ENCODE measurements at regions of chr1 and their contacts with region 1.

Region 1: DNA sequence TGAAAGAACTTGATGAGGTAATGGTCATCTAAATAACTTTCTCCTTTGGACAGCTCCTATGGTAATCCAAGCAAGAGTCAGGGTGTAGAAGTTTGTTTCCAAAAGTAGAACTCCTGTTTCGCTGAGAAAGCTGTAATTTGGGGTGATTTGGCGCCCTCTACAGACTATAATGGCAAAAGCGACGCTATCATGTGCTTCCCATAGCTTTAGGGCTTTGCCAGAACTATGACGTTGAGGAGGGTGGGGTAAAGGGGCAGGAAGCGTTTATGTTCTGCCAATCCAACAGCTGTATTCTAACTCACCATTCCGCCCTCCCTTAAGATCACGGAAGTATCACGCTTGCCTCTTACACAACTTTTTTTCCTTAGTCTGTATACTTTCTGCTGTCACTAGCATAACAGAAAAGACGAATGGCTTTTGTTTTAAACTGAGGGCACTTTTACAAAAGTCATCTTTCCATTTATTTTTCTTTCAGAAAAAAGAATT is at the start of gene FMO4:
- DNase-seq: peak; percentile 90
- ATAC-seq: peak; percentile 100
- H3K4me3 ChIP-seq: peak within 1 kb of the TSS in 2 of 3 experiments; percentile 1 to 19; a peak in 3 of 6 replicates
- H3K27ac ChIP-seq: no peak within 1 kb of the TSS
- H3K4me1 ChIP-seq: peaks cover 8% of the 10 kb centered on the region; the same call in 1 of the 2 replicates
- H3K27me3 ChIP-seq: no peaks in the 10 kb centered on the region
- CTCF ChIP-seq: peak; percentile 82
- EP300 ChIP-seq: no peak
- POLR2A ChIP-seq: no peak
- RAD21 ChIP-seq: peak; percentile 31; the same call in 1 of the 2 replicates
- total RNA-seq, gene FMO4: 0.07 and 0.36 TPM in 2 replicates

Region 2: DNA sequence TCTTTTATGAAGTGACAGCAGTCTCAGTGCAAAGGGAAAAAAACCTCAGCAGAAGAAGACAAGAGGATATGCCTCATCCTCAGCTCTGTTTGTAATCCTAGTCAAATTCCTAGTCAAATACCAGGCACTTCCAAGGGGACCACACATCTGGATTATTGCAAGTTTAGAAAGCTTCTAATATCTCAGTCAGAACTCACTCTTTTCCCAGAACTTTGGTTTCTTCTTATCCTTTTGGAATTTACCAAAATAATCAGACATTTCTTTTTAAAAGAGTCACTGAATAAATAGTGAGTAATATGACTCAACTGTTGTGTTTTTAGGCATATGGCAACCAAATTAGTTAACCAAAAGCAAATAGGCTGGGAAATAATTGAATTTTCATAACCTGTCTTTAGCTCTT is 602.2 kb before region 1 on chr1:
- CTCF ChIA-PET with region 1: no interaction called
- POLR2A ChIA-PET with region 1: no interaction called
- in situ Hi-C with region 1: no loop called
- intact Hi-C with region 1: no loop called
- DNase-seq: no peak
- ATAC-seq: no peak
- H3K4me3 ChIP-seq: no peak overlapping the region
- H3K27ac ChIP-seq: no peak overlapping the region
- H3K4me1 ChIP-seq: no peaks in the 10 kb centered on the region
- H3K27me3 ChIP-seq: no peaks in the 10 kb centered on the region
- CTCF ChIP-seq: no peak
- EP300 ChIP-seq: no peak
- POLR2A ChIP-seq: no peak
- RAD21 ChIP-seq: no peak

Region 3: GRCh38 chr1:170935231-170935630 is 378.6 kb before region 1 on chr1 and contains the start of gene MROH9:
- CTCF ChIA-PET with region 1: no interaction called
- POLR2A ChIA-PET with region 1: no interaction called
- in situ Hi-C with region 1: no loop called
- intact Hi-C with region 1: no loop called
- DNase-seq: no peak
- ATAC-seq: no peak
- H3K4me3 ChIP-seq: no peak within 1 kb of the TSS
- H3K27ac ChIP-seq: no peak within 1 kb of the TSS
- H3K4me1 ChIP-seq: no peaks in the 10 kb centered on the region
- H3K27me3 ChIP-seq: no peaks in the 10 kb centered on the region
- CTCF ChIP-seq: no peak
- EP300 ChIP-seq: no peak
- POLR2A ChIP-seq: no peak
- RAD21 ChIP-seq: no peak
- total RNA-seq, gene MROH9: not detected in 2 replicates

Region 4: GRCh38 chr1:170967042-170967910 is 346.6 kb before region 1 on chr1:
- CTCF ChIA-PET with region 1: no interaction called
- POLR2A ChIA-PET with region 1: no interaction called
- in situ Hi-C with region 1: no loop called
- intact Hi-C with region 1: loop called (anchors 10 kb)
- DNase-seq: peak; percentile 25
- ATAC-seq: peak; percentile 74
- H3K4me3 ChIP-seq: no peak overlapping the region
- H3K27ac ChIP-seq: no peak overlapping the region
- H3K4me1 ChIP-seq: no peaks in the 10 kb centered on the region
- H3K27me3 ChIP-seq: no peaks in the 10 kb centered on the region
- CTCF ChIP-seq: peak; percentile 55
- EP300 ChIP-seq: no peak
- POLR2A ChIP-seq: no peak
- RAD21 ChIP-seq: no peak

Region 5: DNA sequence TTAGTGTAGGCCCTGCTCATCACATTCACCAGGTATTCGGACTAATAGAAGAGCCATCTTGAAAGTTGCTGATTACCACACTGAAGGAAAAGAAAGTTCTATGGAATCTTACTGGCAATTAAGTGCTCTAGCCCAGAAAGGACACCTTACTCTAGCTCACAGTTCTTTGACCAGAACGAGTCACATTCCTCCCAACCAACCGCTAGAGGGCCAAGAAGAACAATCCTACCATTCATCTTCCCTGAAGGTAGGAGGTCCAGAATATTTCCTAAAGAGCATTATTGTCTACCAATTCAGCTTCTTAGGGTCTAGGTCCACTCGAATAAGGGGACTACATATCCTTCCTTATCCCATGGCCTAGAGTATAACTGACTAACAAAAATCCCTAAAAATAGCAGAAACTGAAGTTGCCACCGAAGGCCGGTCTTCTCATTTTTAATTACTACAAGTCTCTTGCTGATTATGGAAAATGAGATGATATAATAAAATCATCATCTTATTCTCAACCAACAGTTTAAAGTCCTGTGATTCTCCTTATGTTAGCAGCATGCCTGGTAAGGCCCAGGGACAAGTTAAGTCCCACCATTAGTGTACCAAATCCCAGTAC is 68.3 kb before region 1 on chr1:
- CTCF ChIA-PET with region 1: interaction called, 7 read pairs
- POLR2A ChIA-PET with region 1: no interaction called
- in situ Hi-C with region 1: no loop called
- intact Hi-C with region 1: loop called (anchors 1 kb)
- DNase-seq: peak; percentile 25
- ATAC-seq: peak; percentile 92
- H3K4me3 ChIP-seq: no peak overlapping the region
- H3K27ac ChIP-seq: no peak overlapping the region
- H3K4me1 ChIP-seq: no peaks in the 10 kb centered on the region
- H3K27me3 ChIP-seq: peaks cover 0 to 8% of the 10 kb centered on the region in 2 experiments; a peak in 2 of 5 replicates
- CTCF ChIP-seq: peak; percentile 71
- EP300 ChIP-seq: no peak
- POLR2A ChIP-seq: no peak
- RAD21 ChIP-seq: no peak

Region 6: DNA sequence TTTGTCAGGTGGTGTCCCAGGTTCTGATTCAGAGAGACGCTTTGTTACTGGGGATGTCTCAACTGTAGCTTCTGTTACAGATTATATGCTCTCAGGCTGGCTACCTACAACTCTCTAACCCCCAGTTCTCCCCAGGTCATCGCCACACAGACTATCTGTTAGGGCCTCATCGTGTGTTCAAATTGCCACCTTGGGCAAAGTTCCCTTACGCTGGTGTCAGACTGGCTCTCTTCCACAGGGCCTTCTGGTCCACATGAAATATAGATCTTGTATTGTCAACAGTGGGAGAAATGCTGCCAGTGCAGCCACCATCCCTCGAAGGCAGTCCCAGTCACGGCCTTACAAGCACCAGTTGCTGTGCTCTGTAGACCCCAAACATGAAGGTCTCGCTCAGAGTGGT is 15.4 kb after region 1 on chr1:
- CTCF ChIA-PET with region 1: no interaction called
- POLR2A ChIA-PET with region 1: no interaction called
- in situ Hi-C with region 1: no loop called
- intact Hi-C with region 1: no loop called
- DNase-seq: no peak
- ATAC-seq: no peak
- H3K4me3 ChIP-seq: no peak overlapping the region
- H3K27ac ChIP-seq: no peak overlapping the region
- H3K4me1 ChIP-seq: no peaks in the 10 kb centered on the region
- H3K27me3 ChIP-seq: no peaks in the 10 kb centered on the region
- CTCF ChIP-seq: no peak
- EP300 ChIP-seq: no peak
- POLR2A ChIP-seq: no peak
- RAD21 ChIP-seq: no peak

Region 7: GRCh38 chr1:171355727-171356126 is 41.8 kb after region 1 on chr1:
- CTCF ChIA-PET with region 1: no interaction called
- POLR2A ChIA-PET with region 1: no interaction called
- in situ Hi-C with region 1: no loop called
- intact Hi-C with region 1: loop called (anchors 2 kb)
- DNase-seq: no peak
- ATAC-seq: no peak
- H3K4me3 ChIP-seq: no peak overlapping the region
- H3K27ac ChIP-seq: no peak overlapping the region
- H3K4me1 ChIP-seq: no peaks in the 10 kb centered on the region
- H3K27me3 ChIP-seq: no peaks in the 10 kb centered on the region
- CTCF ChIP-seq: no peak
- EP300 ChIP-seq: no peak
- POLR2A ChIP-seq: no peak
- RAD21 ChIP-seq: no peak